BJ (cell line): ENCODE measurements at regions of chr9 and their contacts with region 1.

Region 1: GRCh38 chr9:35790385-35791296 is 750 bp upstream of the NPR2 start:
- DNase-seq: peak; percentile 18
- H3K4me3 ChIP-seq: peak overlapping the region; percentile 61
- H3K27me3 ChIP-seq: peaks cover 2% of the 10 kb centered on the region; the same call in 1 of the 2 replicates
- CTCF ChIP-seq: peak; percentile 85

Region 2: GRCh38 chr9:35774907-35775635 is 15.6 kb before region 1 on chr9:
- CTCF ChIA-PET with region 1: interaction called, 89 read pairs
- POLR2A ChIA-PET with region 1: no interaction called
- DNase-seq: no peak
- H3K4me3 ChIP-seq: no peak overlapping the region
- H3K27me3 ChIP-seq: peaks cover 20% of the 10 kb centered on the region
- CTCF ChIP-seq: no peak

Region 3: DNA sequence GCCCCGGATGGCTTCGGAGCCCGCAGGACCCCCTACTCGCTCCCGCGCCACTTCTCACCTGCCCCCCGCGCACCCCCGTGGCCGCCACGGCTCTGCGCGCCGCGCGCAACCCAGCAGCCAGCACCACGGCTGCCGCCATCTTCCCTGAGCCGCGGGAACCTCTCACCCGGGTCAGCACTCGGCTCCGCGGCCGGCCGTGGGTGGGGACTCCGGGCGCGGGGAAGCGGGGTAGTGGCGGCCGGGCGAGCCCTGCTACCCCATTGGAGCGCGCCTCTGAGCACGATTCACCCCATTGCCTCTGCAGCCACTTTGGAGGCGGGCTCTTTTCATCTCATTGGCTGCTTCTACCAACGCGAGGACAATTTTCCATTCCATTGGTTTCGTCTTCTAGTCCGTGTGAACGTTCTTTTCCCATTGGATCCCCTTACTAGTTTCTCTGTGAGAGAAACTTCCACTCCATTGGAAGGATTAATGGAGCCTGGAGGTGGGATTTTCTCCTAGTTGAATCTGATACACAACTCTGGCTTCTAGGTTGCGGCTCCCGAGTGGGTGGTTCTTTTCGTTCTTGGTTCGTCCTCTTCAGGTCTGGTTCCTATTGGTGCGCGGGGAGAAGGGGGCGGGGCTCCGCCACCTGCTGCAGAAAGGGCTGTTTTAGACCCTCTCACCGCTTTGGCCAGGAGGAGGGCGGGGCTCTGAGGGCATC is 24.4 kb after region 1 on chr9 and contains the start of gene HINT2:
- CTCF ChIA-PET with region 1: interaction called, 46 read pairs
- POLR2A ChIA-PET with region 1: interaction called, 3 read pairs
- DNase-seq: peak; percentile 97
- H3K4me3 ChIP-seq: peak within 1 kb of the TSS; percentile 59
- H3K27me3 ChIP-seq: peaks cover 2% of the 10 kb centered on the region; the same call in 1 of the 2 replicates
- CTCF ChIP-seq: no peak
- polyA plus RNA-seq, gene HINT2: 20.9 and 30.0 TPM in 2 replicates

Region 4: DNA sequence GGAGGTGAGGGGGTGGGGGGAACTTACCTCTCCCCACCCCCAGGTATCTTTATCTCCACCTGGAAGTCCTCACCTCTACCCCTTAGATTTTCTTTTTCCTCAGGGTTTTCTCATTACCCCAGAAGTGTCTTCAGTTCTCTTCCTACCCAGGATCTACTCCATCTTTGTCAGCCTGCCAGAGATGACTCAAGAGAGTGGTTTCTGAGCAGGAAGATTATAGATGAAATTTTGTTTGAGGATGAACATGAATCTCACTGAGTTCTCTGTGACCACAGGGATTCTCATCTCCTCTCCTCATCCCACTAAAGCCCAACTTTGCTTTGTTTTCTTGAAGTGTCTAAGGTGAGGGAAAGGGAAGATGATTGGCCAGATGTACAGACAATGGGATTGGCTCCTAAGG is 29.4 kb after region 1 on chr9:
- CTCF ChIA-PET with region 1: interaction called, 84 read pairs
- POLR2A ChIA-PET with region 1: no interaction called
- DNase-seq: no peak
- H3K4me3 ChIP-seq: no peak overlapping the region
- H3K27me3 ChIP-seq: peaks cover 2% of the 10 kb centered on the region; the same call in 1 of the 2 replicates
- CTCF ChIP-seq: no peak